Aorta (tissue), 5 donors: ENCODE measurements at regions of chr12 and their contacts with region 1.

Region 1: DNA sequence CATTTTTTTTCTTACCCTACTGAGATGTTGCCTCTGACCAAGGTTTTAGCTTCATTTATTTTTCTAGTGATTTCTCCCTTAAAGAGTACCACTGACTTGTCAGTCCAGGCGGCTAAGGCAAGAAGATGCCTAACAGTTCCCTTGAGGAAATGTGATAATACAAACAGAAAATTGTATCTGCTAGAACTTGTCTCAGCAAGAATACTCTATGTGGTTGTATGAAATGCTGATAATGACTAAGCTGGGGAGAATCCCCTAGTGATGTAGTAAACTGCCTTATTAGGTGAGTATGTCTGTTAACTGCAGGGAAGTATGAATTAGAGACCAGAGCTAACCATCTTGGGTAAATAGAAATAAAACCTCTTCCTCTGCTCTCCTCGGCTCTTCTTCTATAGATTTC is 6.7 kb downstream of the C12orf54 start:
- DNase-seq: no peak
- ATAC-seq: no peak
- H3K4me3 ChIP-seq: no peak overlapping the region
- H3K27ac ChIP-seq: no peak overlapping the region
- H3K4me1 ChIP-seq: no peaks in the 10 kb centered on the region
- H3K27me3 ChIP-seq: peaks cover 0 to 2% of the 10 kb centered on the region in 2 donors

Region 2: DNA sequence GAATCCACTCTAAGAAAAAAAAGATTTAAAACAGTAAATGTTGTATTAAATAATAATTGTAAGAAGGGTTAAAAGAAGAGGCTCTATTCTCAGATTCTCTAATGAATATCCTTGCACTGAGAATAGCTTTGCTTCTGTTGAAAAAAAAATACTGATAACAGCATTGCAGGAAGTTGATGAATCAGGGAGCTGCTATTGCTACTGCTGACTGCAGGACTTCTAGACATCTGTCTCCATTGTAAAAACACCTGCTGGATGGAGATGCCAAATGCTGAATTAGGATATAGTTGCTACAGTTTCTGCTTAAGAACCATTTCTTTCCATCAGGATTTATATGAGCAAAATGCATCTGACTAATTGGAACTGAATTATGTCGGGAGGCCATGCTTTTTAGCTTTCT is 67.0 kb before region 1 on chr12:
- intact Hi-C with region 1: loop called in 1 of 2 experiments (anchors 10 kb)
- DNase-seq: no peak
- ATAC-seq: no peak
- H3K4me3 ChIP-seq: no peak overlapping the region
- H3K27ac ChIP-seq: no peak overlapping the region
- H3K4me1 ChIP-seq: no peaks in the 10 kb centered on the region
- H3K27me3 ChIP-seq: no peaks in the 10 kb centered on the region